ENCODE measurements at regions of chr12 and their contacts with region 1.

Region 1: GRCh38 chr12:108627134-108627920 is 6.4 kb downstream of the SELPLG start:
- DNase-seq: no peak
- ATAC-seq: no peak
- H3K4me3 ChIP-seq: peak overlapping the region; percentile 2 to 94
- H3K4me3 Mint-ChIP-seq: peak overlapping the region; percentile 39 to 100 (median 56)
- H3K27ac ChIP-seq: peak overlapping the region; percentile 94
- H3K27ac Mint-ChIP-seq: peak overlapping the region; percentile 81 to 86
- H3K4me1 ChIP-seq: peaks cover 31 to 96% of the 10 kb centered on the region in 2 experiments
- H3K4me1 Mint-ChIP-seq: peaks cover 75 to 89% (median 81%) of the 10 kb centered on the region in 3 donors
- H3K27me3 ChIP-seq: no peaks in the 10 kb centered on the region
- H3K27me3 Mint-ChIP-seq: no peaks in the 10 kb centered on the region

Region 2: GRCh38 chr12:108568338-108569154 is 58.8 kb before region 1 on chr12:
- CTCF ChIA-PET with region 1: interaction called, 6 to 10 read pairs
- POLR2A ChIA-PET with region 1: interaction called, 4 to 12 read pairs
- DNase-seq: peak; percentile 20 to 90 (median 76)
- ATAC-seq: peak; percentile 94 to 98 (median 95)
- H3K4me3 ChIP-seq: no peak overlapping the region
- H3K4me3 Mint-ChIP-seq: peak overlapping the region; percentile 51 to 81 (median 51)
- H3K27ac ChIP-seq: peak overlapping the region; percentile 82
- H3K27ac Mint-ChIP-seq: peak overlapping the region; percentile 95 to 98
- H3K4me1 ChIP-seq: peaks cover 38 to 60% of the 10 kb centered on the region in 2 experiments
- H3K4me1 Mint-ChIP-seq: peaks cover 70 to 92% (median 88%) of the 10 kb centered on the region in 3 donors
- H3K27me3 ChIP-seq: no peaks in the 10 kb centered on the region
- H3K27me3 Mint-ChIP-seq: no peaks in the 10 kb centered on the region

Measured in T-cell (primary cell).